ENCODE measurements at regions of chr6 and their contacts with region 1.

Region 1: DNA sequence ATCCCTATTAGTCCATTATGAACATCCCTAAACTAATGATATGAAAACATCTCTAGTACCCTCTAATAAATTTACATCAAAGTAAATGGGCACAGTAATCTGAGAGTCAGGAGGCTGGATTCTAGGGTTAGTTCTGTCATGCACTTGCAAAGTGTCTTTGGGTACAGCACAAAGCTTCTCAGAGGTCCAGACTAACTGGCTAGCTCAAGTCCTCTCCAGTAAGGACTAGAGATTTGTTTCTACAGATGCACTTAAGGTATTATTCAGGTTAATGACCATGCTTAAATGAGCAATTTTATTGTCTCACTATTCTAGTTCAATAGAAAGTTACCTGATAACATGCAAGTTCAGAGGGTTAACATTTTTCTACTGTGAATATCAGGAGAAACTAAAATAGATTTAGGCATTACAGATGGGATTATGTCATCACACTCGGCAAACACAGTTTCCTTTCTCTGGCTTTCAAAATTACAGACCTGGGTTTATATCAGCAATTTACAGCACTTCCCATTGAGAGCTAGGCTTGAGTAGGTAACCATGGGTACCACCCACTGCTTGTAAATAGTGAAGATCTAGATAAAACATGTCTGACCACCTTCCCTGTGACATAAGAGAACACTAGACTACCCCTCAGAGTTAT is 402.9 kb upstream of the RUNX2 start:
- DNase-seq: peak; percentile 36
- H3K4me3 Mint-ChIP-seq: no peak overlapping the region
- H3K27ac Mint-ChIP-seq: no peak overlapping the region
- H3K4me1 Mint-ChIP-seq: peaks cover 27% of the 10 kb centered on the region
- H3K27me3 Mint-ChIP-seq: no peaks in the 10 kb centered on the region
- CTCF ChIP-seq: no peak

Region 2: GRCh38 chr6:44667668-44668390 is 257.4 kb before region 1 on chr6:
- CTCF ChIA-PET with region 1: no interaction called
- intact Hi-C with region 1: loop called (anchors 10 kb)
- DNase-seq: peak; percentile 76
- H3K4me3 Mint-ChIP-seq: no peak overlapping the region
- H3K27ac Mint-ChIP-seq: no peak overlapping the region
- H3K4me1 Mint-ChIP-seq: peaks cover 3% of the 10 kb centered on the region
- H3K27me3 Mint-ChIP-seq: peaks cover 91% of the 10 kb centered on the region
- CTCF ChIP-seq: peak; percentile 87

Region 3: GRCh38 chr6:44788387-44788981 is 136.7 kb before region 1 on chr6:
- CTCF ChIA-PET with region 1: no interaction called
- intact Hi-C with region 1: no loop called
- DNase-seq: no peak
- H3K4me3 Mint-ChIP-seq: no peak overlapping the region
- H3K27ac Mint-ChIP-seq: no peak overlapping the region
- H3K4me1 Mint-ChIP-seq: no peaks in the 10 kb centered on the region
- H3K27me3 Mint-ChIP-seq: peaks cover 81% of the 10 kb centered on the region
- CTCF ChIP-seq: no peak

Region 4: DNA sequence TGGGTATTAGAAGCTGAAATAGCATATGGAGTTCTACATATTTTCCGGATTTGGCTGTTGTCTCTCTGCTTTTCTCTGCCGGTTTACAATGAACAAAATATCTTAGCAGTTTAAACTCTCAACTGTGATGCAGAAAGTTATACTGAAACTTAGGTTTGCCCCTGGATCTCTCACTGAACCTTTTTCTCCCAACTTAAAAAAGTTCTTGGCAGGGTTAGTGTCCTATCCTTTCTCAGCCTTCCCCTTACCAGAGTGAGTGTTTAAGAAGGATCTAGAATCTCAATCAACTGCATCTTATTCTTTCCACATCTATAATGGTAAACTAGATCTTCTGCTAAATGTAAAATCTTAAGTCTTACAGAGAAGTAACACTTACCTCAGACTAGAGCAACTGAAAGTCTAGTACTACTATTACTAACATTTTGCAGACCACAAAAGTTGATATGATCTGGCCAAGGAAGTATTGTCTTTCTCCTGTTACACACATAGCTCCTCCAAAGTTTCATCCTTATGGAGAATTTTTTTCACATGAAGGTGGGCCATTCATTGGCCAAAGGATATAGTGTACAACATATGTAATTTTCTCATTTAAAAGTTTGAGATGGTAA is 10.6 kb after region 1 on chr6:
- CTCF ChIA-PET with region 1: no interaction called
- intact Hi-C with region 1: no loop called
- DNase-seq: no peak
- H3K4me3 Mint-ChIP-seq: no peak overlapping the region
- H3K27ac Mint-ChIP-seq: no peak overlapping the region
- H3K4me1 Mint-ChIP-seq: peaks cover 14% of the 10 kb centered on the region
- H3K27me3 Mint-ChIP-seq: no peaks in the 10 kb centered on the region
- CTCF ChIP-seq: no peak

Region 5: GRCh38 chr6:45001663-45002062 is 76.4 kb after region 1 on chr6:
- CTCF ChIA-PET with region 1: interaction called, 11 read pairs
- intact Hi-C with region 1: loop called (anchors 5 kb)
- DNase-seq: no peak
- H3K4me3 Mint-ChIP-seq: no peak overlapping the region
- H3K27ac Mint-ChIP-seq: no peak overlapping the region
- H3K4me1 Mint-ChIP-seq: no peaks in the 10 kb centered on the region
- H3K27me3 Mint-ChIP-seq: no peaks in the 10 kb centered on the region
- CTCF ChIP-seq: no peak

Region 6: DNA sequence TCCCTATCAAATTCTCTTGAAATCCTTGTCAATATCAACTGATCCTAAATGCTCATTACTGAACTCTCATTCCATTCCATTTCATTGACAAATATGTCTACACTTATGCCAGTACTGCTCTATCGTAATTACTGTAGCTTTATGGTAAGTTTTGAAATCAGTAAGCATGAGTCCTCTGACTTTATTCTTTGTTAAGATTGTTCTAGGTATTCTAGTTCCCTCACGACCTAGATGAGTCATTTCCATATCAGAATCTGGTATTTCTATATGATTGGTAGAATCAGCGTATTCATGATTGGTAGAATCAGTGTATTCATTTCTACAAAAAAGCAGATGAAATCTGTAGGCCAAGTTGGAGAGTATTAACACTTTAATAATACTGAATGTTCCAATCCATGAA is 84.4 kb after region 1 on chr6:
- CTCF ChIA-PET with region 1: no interaction called
- intact Hi-C with region 1: loop called (anchors 5 kb)
- DNase-seq: no peak
- H3K4me3 Mint-ChIP-seq: no peak overlapping the region
- H3K27ac Mint-ChIP-seq: no peak overlapping the region
- H3K4me1 Mint-ChIP-seq: peaks cover 10% of the 10 kb centered on the region
- H3K27me3 Mint-ChIP-seq: no peaks in the 10 kb centered on the region
- CTCF ChIP-seq: no peak

Region 7: GRCh38 chr6:45044510-45045252 is 119.5 kb after region 1 on chr6:
- CTCF ChIA-PET with region 1: no interaction called
- intact Hi-C with region 1: loop called (anchors 5 kb)
- DNase-seq: no peak
- H3K4me3 Mint-ChIP-seq: no peak overlapping the region
- H3K27ac Mint-ChIP-seq: peak overlapping the region; percentile 52
- H3K4me1 Mint-ChIP-seq: peaks cover 46% of the 10 kb centered on the region
- H3K27me3 Mint-ChIP-seq: no peaks in the 10 kb centered on the region
- CTCF ChIP-seq: no peak